Tibial artery (tissue), 4 donors: ENCODE measurements at regions of chr17 and their contacts with region 1.

Region 1: GRCh38 chr17:10103712-10104111 is 94.7 kb downstream of the GAS7 start:
- DNase-seq: no peak
- H3K4me3 ChIP-seq: no peak overlapping the region
- H3K27ac ChIP-seq: no peak overlapping the region
- H3K4me1 ChIP-seq: no peaks in the 10 kb centered on the region
- H3K27me3 ChIP-seq: no peaks in the 10 kb centered on the region
- CTCF ChIP-seq: no peak

Region 2: GRCh38 chr17:9125722-9126121 is 978.0 kb before region 1 on chr17:
- intact Hi-C with region 1: loop called (anchors 5 kb)
- DNase-seq: no peak
- H3K4me3 ChIP-seq: no peak overlapping the region
- H3K27ac ChIP-seq: no peak overlapping the region
- H3K4me1 ChIP-seq: peaks cover 0 to 23% (median 2%) of the 10 kb centered on the region in 4 donors
- H3K27me3 ChIP-seq: no peaks in the 10 kb centered on the region
- CTCF ChIP-seq: no peak

Region 3: DNA sequence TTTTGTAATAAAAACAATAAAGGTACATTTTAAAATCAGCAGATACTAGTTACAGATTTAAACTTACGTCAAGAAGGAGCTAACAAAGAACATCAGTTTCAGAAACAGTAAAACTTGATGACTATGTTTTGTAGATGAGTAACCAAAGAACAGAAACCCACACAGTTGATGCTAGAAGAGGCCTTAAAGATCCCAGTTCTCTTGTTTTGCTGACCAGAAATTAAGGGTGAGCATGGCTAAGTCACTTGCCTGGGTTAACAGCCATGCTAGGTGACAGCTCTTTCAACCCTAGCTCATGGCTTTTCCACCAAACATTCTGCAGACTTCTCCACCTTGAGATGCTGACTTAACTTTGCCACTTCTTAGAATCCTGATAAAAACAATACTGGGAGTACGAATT is 554.5 kb before region 1 on chr17:
- intact Hi-C with region 1: no loop called
- DNase-seq: no peak
- H3K4me3 ChIP-seq: no peak overlapping the region
- H3K27ac ChIP-seq: no peak overlapping the region
- H3K4me1 ChIP-seq: no peaks in the 10 kb centered on the region
- H3K27me3 ChIP-seq: no peaks in the 10 kb centered on the region
- CTCF ChIP-seq: no peak

Region 4: GRCh38 chr17:10059369-10060211 is 44.1 kb before region 1 on chr17:
- intact Hi-C with region 1: no loop called
- DNase-seq: no peak
- H3K4me3 ChIP-seq: no peak overlapping the region
- H3K27ac ChIP-seq: no peak overlapping the region
- H3K4me1 ChIP-seq: peaks cover 0 to 7% (median 0%) of the 10 kb centered on the region in 4 donors
- H3K27me3 ChIP-seq: no peaks in the 10 kb centered on the region
- CTCF ChIP-seq: no peak